HepG2 (cell line): ENCODE measurements at regions of chr11 and their contacts with region 1.

Region 1: GRCh38 chr11:119323538-119324033 is 6.7 kb upstream of the MCAM start:
- DNase-seq: peak; percentile 46
- ATAC-seq: 0 out of 3 replicates have a peak, but pooled peaks have one; percentile 8
- H3K4me3 ChIP-seq: no peak overlapping the region
- H3K27ac ChIP-seq: no peak overlapping the region
- H3K4me1 ChIP-seq: peaks cover 57% of the 10 kb centered on the region
- H3K27me3 ChIP-seq: no peaks in the 10 kb centered on the region; a peak in 2 of 5 replicates
- CTCF ChIP-seq: peak; percentile 78
- EP300 ChIP-seq: no peak
- POLR2A ChIP-seq: no peak
- RAD21 ChIP-seq: peak; percentile 44; the same call in 1 of the 2 replicates

Region 2: DNA sequence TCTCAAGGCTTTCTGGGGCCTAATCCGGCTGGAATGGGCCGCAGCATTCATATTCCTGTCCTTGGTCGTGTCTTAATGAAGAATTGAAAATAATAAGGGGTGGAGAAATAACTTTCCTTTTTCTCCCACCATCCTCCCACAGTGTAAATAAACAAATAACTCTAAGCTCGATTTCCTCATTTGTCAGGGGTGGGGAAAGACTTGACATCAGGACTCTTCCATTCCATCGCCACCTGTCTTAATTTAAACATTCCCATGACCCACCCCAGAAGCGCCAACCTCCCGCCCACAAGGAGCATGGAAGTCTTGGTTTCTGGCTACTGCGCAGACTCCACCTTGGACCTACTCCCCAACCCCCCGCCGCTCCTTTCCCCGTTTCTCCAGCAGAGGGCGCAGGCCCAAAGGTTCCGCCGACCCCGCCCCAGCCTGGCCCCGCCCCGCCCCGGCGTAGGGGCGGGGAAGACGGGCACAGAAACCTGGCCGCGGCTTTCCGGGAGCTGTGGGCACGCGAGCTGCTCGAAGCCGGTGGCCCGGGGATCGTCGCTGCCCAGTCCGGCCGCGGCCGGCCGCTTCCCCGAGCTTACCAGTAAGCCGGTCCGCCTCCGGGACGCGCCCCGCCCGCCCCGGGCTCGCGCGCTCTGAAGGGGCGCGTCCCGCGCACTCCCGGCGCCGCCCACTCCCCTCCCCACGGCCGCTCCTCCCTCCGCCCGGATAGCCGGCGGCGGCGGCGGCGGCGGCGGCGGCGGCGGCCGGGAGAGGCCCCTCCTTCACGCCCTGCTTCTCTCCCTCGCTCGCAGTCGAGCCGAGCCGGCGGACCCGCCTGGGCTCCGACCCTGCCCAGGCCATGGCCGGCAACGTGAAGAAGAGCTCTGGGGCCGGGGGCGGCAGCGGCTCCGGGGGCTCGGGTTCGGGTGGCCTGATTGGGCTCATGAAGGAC is 117.7 kb before region 1 on chr11 and contains the start of gene CBL:
- CTCF ChIA-PET with region 1: no interaction called
- POLR2A ChIA-PET with region 1: no interaction called
- in situ Hi-C with region 1: no loop called
- intact Hi-C with region 1: loop called (anchors 10 kb)
- DNase-seq: peak; percentile 80
- ATAC-seq: peak; percentile 94
- H3K4me3 ChIP-seq: peak within 1 kb of the TSS; percentile 89 to 99 (median 96)
- H3K27ac ChIP-seq: peak within 1 kb of the TSS; percentile 76
- H3K4me1 ChIP-seq: peaks cover 32% of the 10 kb centered on the region
- H3K27me3 ChIP-seq: no peaks in the 10 kb centered on the region; a peak in 1 of 5 replicates
- CTCF ChIP-seq: peak; percentile 86
- EP300 ChIP-seq: no peak
- POLR2A ChIP-seq: peak in 1 of 2 experiments; percentile 53; a peak in 1 of 4 replicates
- RAD21 ChIP-seq: peak; percentile 31; the same call in 1 of the 2 replicates
- total RNA-seq, gene CBL: 7.4 and 11.0 TPM in 2 replicates